Adrenal gland (tissue), 19 donors: ENCODE measurements at regions of chr10 and their contacts with region 1.

Region 1: DNA sequence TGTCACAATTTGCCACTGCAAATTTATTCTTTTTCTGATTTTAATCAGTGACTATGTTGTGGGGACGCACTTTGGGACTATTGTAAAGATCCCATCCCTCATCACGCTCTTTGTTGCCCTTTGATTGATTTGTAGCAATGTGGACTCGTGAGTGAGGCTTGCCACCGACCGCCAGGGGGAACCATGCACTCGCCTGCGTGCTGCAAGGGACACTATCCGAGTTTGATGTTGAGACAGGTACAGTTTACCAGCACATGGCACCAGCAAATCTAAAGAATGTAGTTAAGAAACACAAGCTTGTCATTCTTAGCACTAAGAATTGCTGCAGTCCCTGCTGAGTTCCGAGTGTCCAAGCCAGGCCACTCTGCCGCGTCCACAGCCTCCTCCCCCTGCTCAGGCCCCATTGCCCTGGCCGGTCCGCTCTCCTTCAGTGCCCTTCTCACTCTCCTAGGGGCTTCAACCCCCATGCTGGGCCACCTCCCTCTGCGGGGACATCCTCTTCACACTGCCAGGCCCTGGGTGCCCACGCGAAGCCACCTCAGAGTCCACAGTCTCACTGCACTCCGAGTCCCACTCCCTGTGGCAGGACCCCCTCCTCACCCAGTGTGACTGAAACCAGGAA is 2.0 kb upstream of the SFTPA2 start:
- DNase-seq: peak; percentile 49 to 81 (median 70)
- H3K4me3 ChIP-seq: no peak overlapping the region
- H3K27ac ChIP-seq: no peak overlapping the region
- H3K4me1 ChIP-seq: no peaks in the 10 kb centered on the region
- H3K27me3 ChIP-seq: peaks cover 12% of the 10 kb centered on the region
- CTCF ChIP-seq: peak; percentile 65 to 80 (median 70)
- POLR2A ChIP-seq: no peak

Region 2: DNA sequence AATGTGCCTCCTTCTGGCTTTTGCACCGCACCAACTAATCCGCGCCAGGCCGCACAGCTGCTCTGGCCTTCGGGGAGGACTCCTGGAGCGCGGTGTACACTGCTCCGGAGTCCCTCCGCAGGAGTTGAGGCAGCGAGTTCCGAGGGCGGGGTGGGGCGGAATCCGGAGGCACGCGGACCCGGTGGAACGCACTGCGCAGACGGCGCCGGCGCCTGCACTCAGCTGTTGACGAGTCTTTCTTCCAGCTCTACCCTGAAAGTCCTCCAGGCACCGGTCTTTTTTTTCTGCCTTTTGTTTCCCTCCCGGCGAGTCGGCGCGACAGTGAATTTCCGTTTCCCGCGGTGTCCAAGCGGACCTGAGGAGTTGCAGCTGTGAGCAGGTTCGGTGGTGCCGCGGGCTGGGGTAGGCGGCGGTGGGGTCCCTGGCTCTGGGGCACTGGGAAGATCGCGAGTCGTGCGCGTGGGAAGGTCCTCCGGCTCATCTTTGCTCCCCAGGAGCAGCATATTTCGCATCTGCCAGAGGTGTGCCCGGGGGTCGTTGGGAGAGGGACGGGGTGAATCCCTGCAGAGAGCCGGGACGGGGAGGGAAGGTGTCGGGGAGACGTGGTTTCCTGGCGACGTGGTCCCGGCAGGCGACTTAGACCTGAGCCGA is 342.6 kb after region 1 on chr10:
- intact Hi-C with region 1: loop called in 1 of 2 experiments (anchors 10 kb)
- DNase-seq: peak; percentile 55 to 83 (median 68)
- H3K4me3 ChIP-seq: peak overlapping the region in 3 of 4 donors; percentile 55 to 69 (median 58)
- H3K27ac ChIP-seq: peak overlapping the region in 3 of 5 donors; percentile 11 to 75 (median 69)
- H3K4me1 ChIP-seq: no peaks in the 10 kb centered on the region
- H3K27me3 ChIP-seq: no peaks in the 10 kb centered on the region
- CTCF ChIP-seq: no peak
- POLR2A ChIP-seq: no peak

Region 3: GRCh38 chr10:79933961-79934360 is 371.7 kb after region 1 on chr10:
- intact Hi-C with region 1: loop called in 1 of 2 experiments (anchors 5 kb)
- DNase-seq: no peak
- H3K4me3 ChIP-seq: no peak overlapping the region
- H3K27ac ChIP-seq: no peak overlapping the region
- H3K4me1 ChIP-seq: no peaks in the 10 kb centered on the region
- H3K27me3 ChIP-seq: peaks cover 4% of the 10 kb centered on the region
- CTCF ChIP-seq: no peak
- POLR2A ChIP-seq: no peak